ENCODE measurements at regions of chr14 and their contacts with region 1.

Region 1: GRCh38 chr14:92106143-92106926 is at the start of gene ATXN3:
- DNase-seq: peak; percentile 95
- H3K4me3 Mint-ChIP-seq: peak within 1 kb of the TSS; percentile 81
- H3K27ac Mint-ChIP-seq: peak within 1 kb of the TSS; percentile 38
- H3K4me1 Mint-ChIP-seq: no peaks in the 10 kb centered on the region
- H3K27me3 Mint-ChIP-seq: no peaks in the 10 kb centered on the region
- CTCF ChIP-seq: peak; percentile 50
- total RNA-seq, gene ATXN3: 20.5 and 21.8 TPM in 2 replicates

Region 2: GRCh38 chr14:92039719-92040430 is 66.5 kb before region 1 on chr14 and contains the start of gene TRIP11:
- CTCF ChIA-PET with region 1: no interaction called
- intact Hi-C with region 1: no loop called
- DNase-seq: peak; percentile 96
- H3K4me3 Mint-ChIP-seq: peak within 1 kb of the TSS; percentile 92
- H3K27ac Mint-ChIP-seq: peak within 1 kb of the TSS; percentile 93
- H3K4me1 Mint-ChIP-seq: peaks cover 24% of the 10 kb centered on the region
- H3K27me3 Mint-ChIP-seq: no peaks in the 10 kb centered on the region
- CTCF ChIP-seq: no peak
- total RNA-seq, gene TRIP11: 50.2 and 53.8 TPM in 2 replicates

Region 3: DNA sequence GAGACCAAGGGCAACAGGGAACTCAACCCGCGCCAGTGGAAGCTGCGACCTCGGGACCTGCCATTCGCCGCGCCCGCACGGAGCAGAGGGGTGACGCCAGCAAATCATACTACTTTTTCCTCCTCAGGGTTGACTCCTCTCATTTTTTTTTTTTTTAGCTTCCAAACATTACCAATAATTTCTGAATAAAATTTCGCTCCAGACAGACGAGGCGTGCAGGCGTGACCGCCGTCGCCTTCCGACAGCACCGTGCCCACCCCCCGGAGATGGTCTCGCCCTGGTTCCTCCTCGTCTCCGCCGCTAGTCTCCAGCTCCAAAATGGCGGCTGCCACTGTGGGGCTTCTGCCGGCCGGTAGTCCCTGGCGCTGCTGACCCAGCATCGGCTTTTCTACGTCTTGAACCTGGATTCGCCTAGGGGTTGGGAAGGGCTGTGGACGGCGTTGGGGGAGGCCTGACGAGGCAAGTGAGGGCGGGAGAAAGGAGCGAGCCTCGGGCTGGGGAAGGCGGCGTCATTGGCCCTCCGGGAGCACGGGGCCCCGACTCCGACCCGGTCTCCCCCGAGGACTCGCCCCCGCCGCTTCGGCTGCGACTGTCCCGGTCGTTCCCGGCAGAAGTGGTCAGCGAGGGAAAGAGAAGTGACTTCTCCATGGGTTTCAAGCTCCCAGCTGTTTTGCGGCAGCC is 15.5 kb after region 1 on chr14 and contains the starts of genes CPSF2 and NDUFB1:
- CTCF ChIA-PET with region 1: interaction called, 28 read pairs
- intact Hi-C with region 1: no loop called
- DNase-seq: peak; percentile 87
- H3K4me3 Mint-ChIP-seq: peak within 1 kb of the TSS; percentile 83
- H3K27ac Mint-ChIP-seq: peak within 1 kb of the TSS; percentile 98
- H3K4me1 Mint-ChIP-seq: peaks cover 23% of the 10 kb centered on the region
- H3K27me3 Mint-ChIP-seq: no peaks in the 10 kb centered on the region
- CTCF ChIP-seq: no peak
- total RNA-seq, gene CPSF2: 70.3 and 76.7 TPM in 2 replicates
- total RNA-seq, gene NDUFB1: 101 and 122 TPM in 2 replicates